ENCODE measurements at regions of chr17 and their contacts with region 1.

Region 1: DNA sequence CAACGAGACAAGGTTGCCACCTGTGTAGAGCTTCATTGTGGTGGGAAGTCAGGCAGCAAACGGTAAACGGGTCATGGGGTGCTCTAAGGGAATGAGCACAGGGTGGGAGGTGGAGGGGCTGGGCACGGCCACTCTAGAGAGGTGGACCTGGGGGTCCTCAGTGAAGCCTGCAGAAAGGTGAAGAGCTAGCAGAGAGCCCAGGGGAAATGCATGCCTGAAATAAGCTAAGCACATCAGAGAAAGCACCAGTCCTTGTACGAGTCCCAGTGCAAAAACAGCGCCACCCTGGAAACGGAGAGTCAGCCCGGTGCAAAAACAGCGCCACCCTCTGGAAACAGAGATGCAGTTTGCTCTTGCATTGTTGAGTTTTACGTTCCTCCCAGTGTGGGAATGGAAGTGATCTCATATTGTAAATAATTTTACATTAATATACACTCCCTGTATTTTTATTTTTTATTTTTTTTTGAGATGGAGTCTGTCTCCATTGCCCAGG is 65.0 kb downstream of the TBC1D16 start:
- DNase-seq: peak; percentile 22
- ATAC-seq: no peak

Region 2: DNA sequence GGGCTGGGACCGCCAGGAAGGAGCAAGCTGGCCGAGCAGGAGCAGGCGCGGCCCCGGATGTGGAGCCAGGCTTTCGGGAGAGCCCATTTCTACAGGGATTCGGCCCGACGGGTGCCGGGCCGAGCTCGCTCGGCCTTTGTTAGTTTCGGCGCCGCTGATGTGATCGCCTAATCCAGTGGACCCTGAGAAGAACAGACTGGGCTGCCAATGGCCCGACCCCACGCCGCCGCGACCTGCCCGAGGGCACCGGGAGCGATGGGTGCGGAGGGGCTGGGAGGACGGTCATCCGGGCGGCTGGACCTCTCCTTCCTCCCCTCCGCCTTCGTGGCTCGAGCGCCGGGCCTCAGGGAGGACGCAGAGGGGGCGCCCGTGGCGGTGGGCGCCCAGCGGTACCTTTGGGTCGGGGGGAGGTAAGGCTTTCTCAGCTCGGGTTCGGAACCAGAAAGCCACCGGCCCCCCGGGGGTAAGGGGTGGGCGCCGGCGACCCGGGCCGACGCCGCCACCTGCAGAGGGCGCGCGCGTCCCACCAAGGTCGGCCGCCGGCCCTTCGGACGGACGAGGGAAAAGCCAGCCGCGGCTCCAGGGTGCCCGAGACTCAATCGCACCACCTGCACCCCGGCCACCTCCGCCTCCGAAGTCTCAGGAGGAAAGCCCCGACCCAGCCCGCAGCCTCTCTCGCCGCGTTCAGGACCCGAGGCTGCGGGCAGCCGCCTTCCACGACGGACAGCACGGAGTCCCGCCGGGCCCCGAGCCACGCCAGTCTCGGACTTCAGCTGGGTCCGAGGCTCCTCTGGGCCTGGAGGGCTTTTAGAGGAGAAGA is 180.9 kb before region 1 on chr17:
- intact Hi-C with region 1: loop called in 1 of 2 experiments (anchors 5 kb)
- DNase-seq: no peak
- ATAC-seq: peak; percentile 61

Region 3: GRCh38 chr17:79808763-79809529 is 161.7 kb before region 1 on chr17:
- intact Hi-C with region 1: loop called in 1 of 2 experiments (anchors 5 kb)
- DNase-seq: no peak
- ATAC-seq: peak; percentile 7 to 38

Region 4: DNA sequence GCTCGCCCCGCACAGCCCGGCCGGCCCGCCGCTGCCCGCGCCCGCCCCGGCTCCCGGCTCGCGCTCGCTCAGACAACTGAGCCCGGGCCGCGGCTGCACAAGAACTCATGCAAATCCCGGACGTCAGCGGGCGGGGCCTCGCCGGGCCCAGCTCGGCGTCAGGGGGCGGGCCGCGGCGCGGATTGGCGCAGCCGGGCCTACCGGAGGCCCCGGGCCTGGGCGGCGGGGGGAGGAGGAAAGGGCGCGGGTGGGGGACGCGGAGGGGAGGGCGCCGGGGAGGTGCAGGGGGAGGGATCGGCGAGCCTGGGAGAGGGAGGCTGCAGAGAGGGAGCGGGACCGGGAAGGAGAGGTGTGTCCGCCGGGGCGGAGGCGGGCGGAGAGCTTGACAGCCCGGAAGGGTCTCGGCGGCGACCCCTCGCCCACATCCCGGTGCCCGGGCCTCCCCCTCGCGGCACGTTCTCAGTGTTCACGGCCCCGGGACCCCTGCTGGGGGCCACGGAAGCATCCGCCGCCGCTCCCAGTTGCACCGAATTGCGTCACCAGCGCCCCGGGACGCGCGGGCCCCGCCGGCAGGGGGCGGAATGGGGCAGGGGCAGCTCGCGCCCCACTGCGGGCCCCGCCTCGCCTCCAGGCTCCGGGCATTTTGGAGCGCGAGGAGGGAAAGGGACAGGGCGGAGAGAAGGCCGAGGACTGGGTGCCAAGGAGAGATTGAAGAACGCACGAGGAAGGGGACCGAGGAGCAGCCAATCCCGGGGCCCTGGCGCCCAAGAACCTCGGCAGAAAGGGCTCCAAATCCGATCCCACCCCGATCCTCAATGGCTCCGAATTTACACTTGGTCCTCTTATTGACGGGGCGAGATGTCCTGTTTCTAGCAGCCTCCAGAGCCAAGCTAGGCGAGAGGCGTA is 131.0 kb before region 1 on chr17 and contains the start of gene CBX4:
- intact Hi-C with region 1: no loop called
- DNase-seq: peak; percentile 96
- ATAC-seq: peak; percentile 80 to 83
- total RNA-seq, gene CBX4: 17.9 to 24.2 TPM

Region 5: DNA sequence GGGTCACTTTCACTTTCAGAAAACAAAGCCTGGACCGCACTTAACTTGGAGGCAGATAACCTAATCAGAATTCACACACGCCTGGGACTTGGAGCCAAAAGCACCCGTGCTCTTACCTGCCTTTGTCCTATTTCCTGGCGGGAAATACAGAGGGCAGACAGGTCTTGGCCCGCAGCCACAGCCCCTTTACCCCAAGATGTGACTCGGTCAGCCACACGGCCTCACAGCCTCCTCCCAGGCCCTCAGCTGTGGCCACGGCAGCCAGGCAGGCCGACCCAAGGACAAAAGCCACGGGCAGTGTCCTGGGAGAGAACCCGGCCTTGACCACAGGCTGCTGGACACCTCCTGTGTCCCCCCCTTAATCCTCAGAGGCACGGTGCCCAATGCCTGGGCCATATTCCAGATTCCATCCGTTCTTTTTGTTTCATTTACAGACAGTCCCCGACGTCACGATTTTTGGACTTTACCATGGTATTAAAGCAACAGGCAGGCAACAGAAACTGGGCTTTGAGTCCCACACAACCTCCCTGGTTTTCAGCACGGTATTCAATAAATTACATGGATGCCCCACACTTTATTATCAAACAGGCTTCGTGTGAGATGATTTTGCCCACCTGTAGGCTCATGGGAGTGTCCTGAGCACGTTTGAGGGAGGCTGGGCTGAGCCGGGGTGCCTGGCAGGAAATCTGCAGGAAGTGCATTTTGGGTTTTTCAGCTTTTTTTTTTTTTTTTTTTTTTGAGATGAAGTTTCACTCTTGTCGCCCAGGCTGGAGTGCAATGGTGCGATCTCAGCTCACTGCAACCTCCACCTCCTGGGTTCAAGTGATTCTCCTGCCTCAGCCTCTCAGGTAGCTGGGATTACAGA is 100.7 kb after region 1 on chr17:
- intact Hi-C with region 1: no loop called
- DNase-seq: peak; percentile 75
- ATAC-seq: peak; percentile 68 to 75